ENCODE measurements at regions of chr6 and their contacts with region 1.

Region 1: DNA sequence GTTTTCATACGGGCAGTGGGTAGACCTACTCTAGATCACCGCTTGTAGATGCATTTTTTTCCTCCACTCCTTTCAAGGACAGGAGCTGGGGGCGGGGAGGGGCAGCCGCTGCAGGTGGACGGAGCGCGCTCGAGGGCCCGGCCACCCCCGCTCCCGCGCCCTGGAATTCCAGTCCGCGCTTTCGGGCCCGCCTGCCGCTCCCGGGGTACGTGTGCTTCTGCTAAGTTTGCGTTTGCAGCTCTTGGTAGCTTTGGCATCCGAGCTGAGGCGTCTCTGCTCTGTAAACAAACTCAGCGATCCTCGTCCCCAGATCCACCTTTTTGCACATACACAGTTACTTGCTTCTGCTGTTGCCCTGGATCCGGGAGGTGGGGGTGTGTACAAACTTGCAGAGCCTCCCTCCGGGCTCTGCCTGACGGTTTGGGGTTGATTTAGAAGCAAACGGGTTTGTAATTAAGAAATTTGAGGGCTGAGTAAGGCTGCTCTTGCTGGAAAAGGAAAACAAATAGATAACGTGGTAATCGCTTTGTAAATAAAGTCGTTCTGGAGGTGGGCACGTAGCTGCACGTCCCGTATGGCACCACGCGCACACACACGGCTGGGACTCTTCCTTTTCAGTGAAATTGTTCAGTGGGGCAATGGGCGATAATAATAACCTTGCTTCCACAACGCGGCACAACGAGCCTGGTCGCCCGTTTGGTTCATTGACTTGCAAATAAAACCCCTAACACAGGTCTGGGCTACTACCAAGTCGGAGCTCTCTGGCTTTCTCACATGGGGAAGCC is 976 bp upstream of the CITED2 start:
- DNase-seq: peak; percentile 89 to 96 (median 95)
- ATAC-seq: peak; percentile 64 to 81 (median 73)
- H3K4me3 ChIP-seq: peak overlapping the region; percentile 71 to 73 (median 71)
- H3K27ac ChIP-seq: peak overlapping the region; percentile 88 to 97 (median 94)
- H3K4me1 ChIP-seq: peaks cover 0 to 37% (median 5%) of the 10 kb centered on the region in 4 donors
- H3K27me3 ChIP-seq: no peaks in the 10 kb centered on the region
- CTCF ChIP-seq: peak in 2 of 4 donors; percentile 6 to 11
- POLR2A ChIP-seq: peak; percentile 63

Region 2: DNA sequence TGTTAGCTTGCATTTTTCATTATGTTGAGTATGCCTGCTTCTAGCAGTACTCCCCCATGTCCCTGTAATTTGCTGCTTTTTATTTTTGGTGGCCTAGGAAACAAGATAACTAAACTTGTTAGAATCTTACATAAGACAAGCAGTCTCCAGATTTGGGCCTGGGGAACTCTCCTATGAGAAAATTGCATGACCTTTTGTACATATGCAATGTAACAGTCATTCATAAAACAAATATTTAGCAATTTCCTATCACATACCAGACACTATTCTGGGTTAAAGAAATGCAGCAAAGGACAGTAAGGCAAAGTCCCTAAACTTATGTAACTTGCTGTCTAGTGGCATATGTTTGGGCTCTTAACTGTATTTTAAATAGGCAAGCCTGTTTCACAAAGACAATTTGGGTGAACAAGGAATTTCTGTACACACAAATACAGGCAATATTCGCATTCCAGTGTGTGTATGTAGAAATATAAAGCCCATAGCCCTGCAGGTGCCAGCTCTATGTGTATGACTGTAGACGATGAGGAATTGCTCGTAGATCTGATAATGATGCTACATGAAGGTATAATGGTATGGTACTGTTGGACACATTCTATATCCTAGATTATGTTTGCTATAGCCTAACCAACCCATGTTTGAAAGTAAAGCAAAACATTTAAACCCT is 304.2 kb after region 1 on chr6:
- intact Hi-C with region 1: loop called in 1 of 2 experiments (anchors 10 kb)
- DNase-seq: no peak
- ATAC-seq: peak; percentile 45 to 86 (median 68)
- H3K4me3 ChIP-seq: no peak overlapping the region
- H3K27ac ChIP-seq: no peak overlapping the region
- H3K4me1 ChIP-seq: peaks cover 0 to 9% (median 0%) of the 10 kb centered on the region in 4 donors
- H3K27me3 ChIP-seq: no peaks in the 10 kb centered on the region
- CTCF ChIP-seq: no peak
- POLR2A ChIP-seq: no peak

Region 3: DNA sequence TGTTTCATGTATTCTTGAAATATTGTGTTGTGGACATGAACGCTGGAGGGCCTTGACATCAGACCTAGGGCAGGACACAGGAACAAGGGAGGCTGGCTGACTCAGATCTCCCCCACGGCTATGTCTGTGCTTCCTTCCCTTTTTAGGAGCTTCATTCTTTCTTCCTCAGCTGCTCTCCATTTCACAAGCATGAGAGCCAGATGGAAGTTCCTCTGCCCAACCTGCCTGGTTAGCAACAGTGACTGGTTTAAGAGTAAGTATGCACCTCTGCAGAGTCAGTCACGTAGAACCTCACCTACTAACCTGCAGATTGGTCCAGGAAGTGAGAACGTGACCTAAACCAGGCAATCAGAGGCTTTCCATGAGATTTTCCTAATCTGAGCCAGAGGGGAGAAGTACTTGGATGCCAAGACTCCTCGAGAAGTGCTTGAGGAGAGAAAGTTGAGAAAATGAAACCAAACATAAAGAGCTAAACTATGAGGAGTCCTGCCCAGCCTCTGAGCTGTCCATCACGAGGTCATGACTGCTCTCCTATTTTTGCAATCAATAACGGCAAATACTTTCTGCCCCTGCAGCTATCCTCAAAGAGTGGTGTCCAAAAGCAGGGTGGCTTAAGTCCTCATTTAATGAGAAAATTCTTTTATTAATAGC is 464.2 kb after region 1 on chr6:
- intact Hi-C with region 1: loop called in 1 of 2 experiments (anchors 10 kb)
- DNase-seq: peak in 2 of 3 donors; percentile 38 to 45
- ATAC-seq: peak; percentile 84 to 87 (median 87)
- H3K4me3 ChIP-seq: peak overlapping the region; percentile 25 to 50 (median 29)
- H3K27ac ChIP-seq: peak overlapping the region; percentile 61 to 83 (median 69)
- H3K4me1 ChIP-seq: peaks cover 0 to 7% (median under 1%) of the 10 kb centered on the region in 4 donors
- H3K27me3 ChIP-seq: no peaks in the 10 kb centered on the region
- CTCF ChIP-seq: no peak
- POLR2A ChIP-seq: no peak